HepG2 (cell line): ENCODE measurements at regions of chr15 and their contacts with region 1.

Region 1: GRCh38 chr15:92881802-92882696 is 18.1 kb upstream of the CHD2 start:
- DNase-seq: peak; percentile 99
- ATAC-seq: peak; percentile 96
- H3K4me3 ChIP-seq: peak overlapping the region; percentile 59 to 67 (median 62)
- H3K27ac ChIP-seq: peak overlapping the region; percentile 90
- H3K4me1 ChIP-seq: peaks cover 56% of the 10 kb centered on the region
- H3K27me3 ChIP-seq: peaks cover 0 to 4% of the 10 kb centered on the region in 2 experiments; a peak in 1 of 5 replicates
- CTCF ChIP-seq: no peak
- EP300 ChIP-seq: no peak
- POLR2A ChIP-seq: peak; percentile 92 to 96
- RAD21 ChIP-seq: 0 out of 2 replicates have a peak, but pooled peaks have one; percentile 27

Region 2: DNA sequence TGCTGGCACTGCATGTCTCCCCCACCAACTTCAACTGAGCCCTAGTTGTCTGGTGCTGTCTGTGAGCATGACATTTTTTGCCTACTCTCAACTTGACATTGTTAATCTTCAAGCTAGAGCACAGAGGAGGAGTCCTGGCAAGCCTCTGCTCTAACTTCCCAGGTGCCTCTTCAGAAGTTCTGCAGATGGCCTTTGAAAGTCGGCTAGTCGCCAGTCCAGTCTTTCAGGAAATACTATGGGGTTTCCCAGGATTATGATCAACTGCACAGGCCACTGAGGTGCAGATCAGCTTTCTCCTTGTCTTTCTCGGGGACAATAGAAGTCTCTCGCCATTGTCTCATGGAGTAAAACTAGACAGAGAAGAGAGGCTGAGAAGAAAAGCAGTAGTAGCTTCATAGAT is 401.7 kb before region 1 on chr15:
- CTCF ChIA-PET with region 1: no interaction called
- POLR2A ChIA-PET with region 1: no interaction called
- in situ Hi-C with region 1: no loop called
- intact Hi-C with region 1: no loop called
- DNase-seq: no peak
- ATAC-seq: no peak
- H3K4me3 ChIP-seq: no peak overlapping the region
- H3K27ac ChIP-seq: no peak overlapping the region
- H3K4me1 ChIP-seq: no peaks in the 10 kb centered on the region
- H3K27me3 ChIP-seq: no peaks in the 10 kb centered on the region; a peak in 1 of 5 replicates
- CTCF ChIP-seq: no peak
- EP300 ChIP-seq: no peak
- POLR2A ChIP-seq: no peak
- RAD21 ChIP-seq: no peak

Region 3: DNA sequence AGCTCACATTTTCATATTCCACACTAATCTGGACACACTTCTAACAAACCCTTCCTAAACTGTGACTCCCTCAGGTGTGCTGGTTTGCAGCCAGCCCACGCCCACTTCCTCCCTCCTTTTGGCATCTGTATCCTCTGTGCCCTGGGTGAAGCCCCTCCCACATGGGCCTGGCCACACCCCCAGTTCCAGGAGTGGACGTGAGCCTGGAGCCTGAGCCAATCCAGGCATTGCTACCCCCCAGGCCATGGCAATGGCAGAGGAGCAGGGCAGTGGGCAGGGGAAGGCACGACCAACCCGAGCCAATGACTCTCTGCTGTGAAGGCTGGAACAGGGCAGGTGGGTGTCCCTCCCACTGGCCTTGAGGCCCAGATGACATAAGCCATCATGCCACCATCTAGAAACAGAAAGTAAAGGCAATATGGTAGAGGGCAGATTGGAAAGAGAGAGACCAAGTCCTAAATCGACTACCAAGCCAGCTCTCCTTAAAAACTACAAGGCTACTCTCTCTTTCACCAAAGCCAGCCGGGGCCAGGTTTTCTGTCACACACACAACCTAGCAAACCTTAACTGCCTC is 245.1 kb before region 1 on chr15:
- CTCF ChIA-PET with region 1: no interaction called
- POLR2A ChIA-PET with region 1: no interaction called
- in situ Hi-C with region 1: no loop called
- intact Hi-C with region 1: no loop called
- DNase-seq: no peak
- ATAC-seq: peak; percentile 39; the same call in 2 of the 3 replicates
- H3K4me3 ChIP-seq: no peak overlapping the region
- H3K27ac ChIP-seq: no peak overlapping the region
- H3K4me1 ChIP-seq: peaks cover 20% of the 10 kb centered on the region
- H3K27me3 ChIP-seq: no peaks in the 10 kb centered on the region; a peak in 1 of 5 replicates
- CTCF ChIP-seq: no peak
- EP300 ChIP-seq: no peak
- POLR2A ChIP-seq: no peak
- RAD21 ChIP-seq: no peak

Region 4: DNA sequence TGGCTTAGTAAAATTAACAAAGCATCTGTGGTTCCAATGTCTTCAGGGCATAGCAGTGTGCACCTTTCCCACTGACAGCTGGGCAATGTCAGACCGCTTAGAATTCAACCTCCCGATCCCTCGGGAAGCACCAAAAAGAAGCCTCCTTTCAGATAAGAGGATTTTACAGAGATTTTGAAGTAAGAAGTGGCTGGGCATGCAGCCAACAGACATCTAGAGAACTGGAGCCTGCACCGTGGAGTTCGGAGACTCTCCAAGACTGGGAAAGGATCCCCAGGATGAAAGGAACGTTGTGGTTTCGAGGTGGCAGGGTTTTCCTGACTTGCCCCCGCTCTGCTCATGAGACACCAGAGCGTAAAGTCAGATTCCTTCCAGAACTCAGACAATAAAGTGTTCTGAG is 231.8 kb before region 1 on chr15:
- CTCF ChIA-PET with region 1: no interaction called
- POLR2A ChIA-PET with region 1: no interaction called
- in situ Hi-C with region 1: no loop called
- intact Hi-C with region 1: no loop called
- DNase-seq: no peak
- ATAC-seq: no peak
- H3K4me3 ChIP-seq: no peak overlapping the region
- H3K27ac ChIP-seq: no peak overlapping the region
- H3K4me1 ChIP-seq: no peaks in the 10 kb centered on the region
- H3K27me3 ChIP-seq: peaks cover 0 to 32% of the 10 kb centered on the region in 2 experiments; a peak in 2 of 5 replicates
- CTCF ChIP-seq: no peak
- EP300 ChIP-seq: no peak
- POLR2A ChIP-seq: no peak
- RAD21 ChIP-seq: no peak

Region 5: GRCh38 chr15:92797168-92797951 is 84.7 kb before region 1 on chr15:
- CTCF ChIA-PET with region 1: no interaction called
- POLR2A ChIA-PET with region 1: interaction called, 34 read pairs
- in situ Hi-C with region 1: no loop called
- intact Hi-C with region 1: no loop called
- DNase-seq: peak; percentile 78
- ATAC-seq: peak; percentile 27
- H3K4me3 ChIP-seq: peak overlapping the region in 2 of 3 experiments; percentile 46 to 65; a peak in 1 of 6 replicates
- H3K27ac ChIP-seq: peak overlapping the region; percentile 15
- H3K4me1 ChIP-seq: peaks cover 46% of the 10 kb centered on the region
- H3K27me3 ChIP-seq: no peaks in the 10 kb centered on the region
- CTCF ChIP-seq: peak; percentile 74
- EP300 ChIP-seq: no peak
- POLR2A ChIP-seq: no peak
- RAD21 ChIP-seq: peak; percentile 27; the same call in 1 of the 2 replicates

Region 6: GRCh38 chr15:92820236-92821021 is 61.6 kb before region 1 on chr15:
- CTCF ChIA-PET with region 1: no interaction called
- POLR2A ChIA-PET with region 1: interaction called, 70 read pairs
- in situ Hi-C with region 1: no loop called
- intact Hi-C with region 1: no loop called
- DNase-seq: peak; percentile 84
- ATAC-seq: peak; percentile 92
- H3K4me3 ChIP-seq: peak overlapping the region; percentile 41 to 67 (median 65)
- H3K27ac ChIP-seq: peak overlapping the region; percentile 95
- H3K4me1 ChIP-seq: peaks cover 62% of the 10 kb centered on the region
- H3K27me3 ChIP-seq: no peaks in the 10 kb centered on the region
- CTCF ChIP-seq: no peak
- EP300 ChIP-seq: peak in 1 of 2 experiments; percentile 73; a peak in 1 of 4 replicates
- POLR2A ChIP-seq: peak; percentile 68 to 93
- RAD21 ChIP-seq: no peak

Region 7: GRCh38 chr15:92839696-92840095 is 42.4 kb before region 1 on chr15:
- CTCF ChIA-PET with region 1: no interaction called
- POLR2A ChIA-PET with region 1: interaction called, 14 read pairs
- in situ Hi-C with region 1: no loop called
- intact Hi-C with region 1: no loop called
- DNase-seq: no peak
- ATAC-seq: peak; percentile 50
- H3K4me3 ChIP-seq: no peak overlapping the region
- H3K27ac ChIP-seq: no peak overlapping the region
- H3K4me1 ChIP-seq: peaks cover 31% of the 10 kb centered on the region
- H3K27me3 ChIP-seq: no peaks in the 10 kb centered on the region
- CTCF ChIP-seq: no peak
- EP300 ChIP-seq: no peak
- POLR2A ChIP-seq: no peak
- RAD21 ChIP-seq: no peak

Region 8: GRCh38 chr15:92903941-92904831 is 22.1 kb after region 1 on chr15:
- CTCF ChIA-PET with region 1: no interaction called
- POLR2A ChIA-PET with region 1: interaction called, 184 read pairs
- in situ Hi-C with region 1: no loop called
- intact Hi-C with region 1: loop called (anchors 2 kb)
- DNase-seq: peak; percentile 96
- ATAC-seq: peak; percentile 90
- H3K4me3 ChIP-seq: peak overlapping the region; percentile 88 to 90 (median 89)
- H3K27ac ChIP-seq: peak overlapping the region; percentile 100
- H3K4me1 ChIP-seq: peaks cover 47% of the 10 kb centered on the region
- H3K27me3 ChIP-seq: no peaks in the 10 kb centered on the region; a peak in 1 of 5 replicates
- CTCF ChIP-seq: no peak; the same call in 1 of the 2 replicates
- EP300 ChIP-seq: peak in 1 of 2 experiments; percentile 54; a peak in 1 of 4 replicates
- POLR2A ChIP-seq: peak; percentile 85 to 99
- RAD21 ChIP-seq: peak; percentile 75

Region 9: DNA sequence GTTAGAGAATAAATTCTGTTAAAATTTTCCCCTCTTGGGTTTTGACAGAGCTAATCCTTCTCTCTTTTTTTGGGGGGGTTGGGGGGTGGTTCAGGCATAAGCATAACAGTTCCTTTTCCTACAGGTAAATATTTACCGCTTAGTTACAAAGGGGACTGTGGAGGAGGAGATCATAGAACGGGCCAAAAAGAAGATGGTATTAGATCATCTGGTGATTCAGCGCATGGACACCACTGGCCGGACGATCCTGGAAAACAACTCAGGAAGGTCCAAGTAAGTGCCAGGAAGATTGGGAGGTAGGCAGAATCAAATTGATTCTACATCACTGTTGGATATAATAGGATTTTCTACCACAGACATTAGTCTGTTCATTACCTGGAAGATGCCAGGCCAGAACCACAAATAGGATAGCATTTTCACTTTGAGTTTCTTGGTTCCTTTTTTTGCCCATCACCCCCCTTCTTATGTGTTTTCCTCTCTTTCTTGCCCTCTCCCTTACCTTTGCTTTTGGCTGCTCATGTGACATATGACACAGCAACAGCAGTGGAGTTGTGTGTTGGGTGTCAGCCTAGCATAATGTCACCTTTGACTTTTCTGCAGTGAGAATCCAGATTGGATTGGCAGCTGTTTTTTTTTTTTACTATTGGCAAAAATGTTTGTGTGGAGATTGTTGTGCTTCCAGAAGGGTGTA is 97.1 kb after region 1 on chr15:
- CTCF ChIA-PET with region 1: no interaction called
- POLR2A ChIA-PET with region 1: no interaction called
- in situ Hi-C with region 1: no loop called
- intact Hi-C with region 1: no loop called
- DNase-seq: no peak
- ATAC-seq: no peak
- H3K4me3 ChIP-seq: no peak overlapping the region
- H3K27ac ChIP-seq: no peak overlapping the region
- H3K4me1 ChIP-seq: no peaks in the 10 kb centered on the region
- H3K27me3 ChIP-seq: no peaks in the 10 kb centered on the region
- CTCF ChIP-seq: no peak
- EP300 ChIP-seq: no peak
- POLR2A ChIP-seq: no peak
- RAD21 ChIP-seq: no peak